Posterior vena cava (tissue), 2 donors: ENCODE measurements at regions of chr15 and their contacts with region 1.

Region 1: GRCh38 chr15:93748710-93749109 is 482.7 kb upstream of the MCTP2 start:
- DNase-seq: no peak

Region 2: DNA sequence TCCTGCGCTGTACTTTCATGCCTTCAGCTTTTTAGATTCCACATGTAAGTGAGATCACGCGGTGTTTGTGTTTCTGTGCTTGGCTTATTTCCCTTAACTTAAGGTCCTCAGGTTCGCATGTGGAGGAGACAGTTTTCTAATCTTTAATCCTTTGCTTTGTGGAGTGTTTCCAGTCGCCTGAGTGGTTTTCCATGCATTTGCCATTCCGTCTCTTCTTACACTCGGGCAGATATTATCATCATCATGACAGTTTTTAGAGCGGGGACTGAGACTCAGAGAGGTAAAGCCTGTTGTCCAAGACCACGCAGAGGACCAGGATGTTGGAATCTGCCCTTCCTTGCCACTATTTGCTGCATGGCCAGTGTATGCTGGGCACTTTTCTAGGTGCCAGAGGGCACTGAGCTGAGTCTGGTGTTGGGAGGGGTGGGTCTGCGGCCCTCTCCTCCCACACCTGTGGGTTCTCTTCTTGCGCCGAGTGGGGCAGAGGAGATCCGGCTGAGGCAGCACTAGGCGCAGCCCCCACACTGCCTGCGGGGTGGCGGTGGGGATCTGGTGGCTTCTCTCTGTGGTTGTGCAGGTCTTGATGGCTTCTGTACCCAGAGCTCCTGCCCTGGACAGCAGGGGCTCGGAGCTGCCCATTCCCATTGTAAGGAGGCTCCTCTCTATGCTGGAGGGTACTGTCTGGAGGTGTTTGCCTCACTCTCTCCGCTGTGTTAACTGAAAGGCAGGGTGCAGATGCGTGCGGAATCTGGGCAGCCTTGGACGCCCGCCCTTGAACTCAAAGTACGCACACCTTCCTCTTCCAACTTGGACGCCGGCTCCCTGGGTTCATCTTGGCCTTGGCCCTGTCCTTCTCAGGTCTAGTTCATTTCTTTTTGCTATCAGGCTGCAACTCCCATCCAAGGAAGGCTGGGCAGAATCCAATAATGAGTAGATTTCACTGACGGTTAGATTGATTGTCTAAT is 503.7 kb before region 1 on chr15:
- intact Hi-C with region 1: loop called in 1 of 2 experiments (anchors 5 kb)
- DNase-seq: no peak

Region 3: DNA sequence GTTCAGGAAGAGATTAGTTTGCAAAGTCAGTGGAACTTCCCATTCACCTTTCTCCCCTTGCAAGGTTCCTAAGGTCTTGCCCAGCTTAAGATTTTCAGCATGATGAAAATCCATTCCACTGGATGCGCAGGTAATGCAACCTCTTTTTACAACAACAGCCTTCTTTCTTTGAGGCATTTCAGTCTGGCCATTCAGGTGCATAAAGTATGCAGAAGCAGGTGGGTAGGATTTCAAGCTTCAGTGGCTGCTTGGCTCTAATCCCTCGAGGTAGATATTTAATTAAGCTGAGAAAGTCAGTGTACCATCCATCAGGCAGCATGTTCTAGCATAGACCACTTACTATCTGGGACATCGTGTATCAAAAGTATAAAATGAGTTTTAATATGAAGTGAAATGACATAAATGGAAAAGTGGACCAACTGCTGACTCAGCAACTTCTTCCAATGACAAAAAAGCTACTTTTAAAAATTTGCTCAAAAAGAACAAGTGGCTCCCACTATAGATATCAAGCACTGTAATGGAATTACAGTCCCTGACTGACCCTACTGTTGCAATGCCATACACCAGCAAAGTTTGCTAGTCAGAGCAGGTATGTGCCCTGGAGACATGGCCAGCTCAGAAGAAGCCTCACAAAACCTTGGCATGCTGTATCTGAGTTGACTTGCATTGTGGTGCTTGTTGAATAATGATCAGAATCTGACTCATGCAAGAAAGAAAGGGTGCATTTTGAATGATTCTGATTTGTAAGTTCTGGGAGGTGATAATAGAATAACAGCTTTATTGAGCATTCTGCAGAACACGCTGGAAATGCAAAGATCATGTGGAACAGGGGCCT is 22.7 kb after region 1 on chr15:
- intact Hi-C with region 1: loop called in 1 of 2 experiments (anchors 1 kb)
- DNase-seq: no peak